CD4-positive, alpha-beta T cell (primary cell): ENCODE measurements at regions of chr7 and their contacts with region 1.

Region 1: DNA sequence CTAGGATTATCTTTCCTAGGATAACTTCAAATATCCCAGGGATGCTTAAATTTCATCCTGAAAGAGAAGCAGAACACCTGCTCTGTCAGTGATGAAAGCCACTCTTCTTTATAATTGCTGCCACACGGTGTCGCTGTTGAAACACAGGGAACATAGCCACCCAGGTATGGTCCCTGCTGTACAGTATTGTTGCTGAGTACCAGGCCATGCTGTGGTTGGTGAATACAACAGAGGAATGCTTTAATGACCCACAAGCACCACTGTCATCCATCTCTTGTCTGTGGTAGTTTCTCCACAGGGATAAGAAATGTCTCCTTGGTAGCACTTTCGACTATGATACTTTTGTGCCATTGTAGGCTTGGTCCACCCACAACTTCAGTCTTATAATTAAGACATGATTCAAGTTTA is 70.6 kb upstream of the STARD3NL start:
- DNase-seq: peak; percentile 34 to 80 (median 60)
- ATAC-seq: peak; percentile 81
- H3K4me3 ChIP-seq: no peak overlapping the region
- H3K4me3 Mint-ChIP-seq: no peak overlapping the region
- H3K27ac ChIP-seq: no peak overlapping the region
- H3K27ac Mint-ChIP-seq: no peak overlapping the region
- H3K4me1 ChIP-seq: no peaks in the 10 kb centered on the region
- H3K4me1 Mint-ChIP-seq: no peaks in the 10 kb centered on the region
- H3K27me3 ChIP-seq: peaks cover 0 to 5% of the 10 kb centered on the region in 2 experiments
- H3K27me3 Mint-ChIP-seq: peaks cover 12% of the 10 kb centered on the region
- CTCF ChIP-seq: peak; percentile 92

Region 2: DNA sequence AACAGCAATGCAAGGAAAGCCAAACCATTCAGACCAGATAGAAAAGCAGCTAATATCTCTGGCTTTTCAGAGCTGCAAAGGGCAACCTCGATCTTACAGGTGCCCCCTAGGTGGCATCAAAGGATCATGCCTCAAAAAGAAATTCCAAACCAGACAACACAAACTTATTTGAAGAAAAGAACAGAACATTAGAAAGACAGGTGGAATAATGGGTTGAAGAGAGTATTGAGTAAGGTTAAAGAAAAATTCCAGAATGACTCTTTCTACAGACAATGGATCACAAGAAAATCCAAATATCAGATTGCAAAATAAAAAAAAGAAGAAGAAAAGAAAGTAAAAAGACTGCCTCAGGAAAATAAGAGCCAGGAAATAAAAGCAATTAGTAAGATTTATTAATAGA is 872.6 kb before region 1 on chr7:
- CTCF ChIA-PET with region 1: no interaction called
- POLR2A ChIA-PET with region 1: no interaction called
- intact Hi-C with region 1: no loop called
- DNase-seq: peak in 6 of 14 experiments; percentile 5 to 61 (median 34)
- ATAC-seq: no peak
- H3K4me3 ChIP-seq: no peak overlapping the region
- H3K4me3 Mint-ChIP-seq: no peak overlapping the region
- H3K27ac ChIP-seq: no peak overlapping the region
- H3K27ac Mint-ChIP-seq: no peak overlapping the region
- H3K4me1 ChIP-seq: peaks cover 4% of the 10 kb centered on the region
- H3K4me1 Mint-ChIP-seq: peaks cover 33% of the 10 kb centered on the region
- H3K27me3 ChIP-seq: no peaks in the 10 kb centered on the region
- H3K27me3 Mint-ChIP-seq: no peaks in the 10 kb centered on the region
- CTCF ChIP-seq: peak; percentile 49

Region 3: GRCh38 chr7:37882086-37882485 is 225.4 kb before region 1 on chr7:
- CTCF ChIA-PET with region 1: no interaction called
- POLR2A ChIA-PET with region 1: no interaction called
- intact Hi-C with region 1: no loop called
- DNase-seq: peak in 1 of 14 experiments; percentile 0
- ATAC-seq: no peak
- H3K4me3 ChIP-seq: no peak overlapping the region
- H3K4me3 Mint-ChIP-seq: no peak overlapping the region
- H3K27ac ChIP-seq: no peak overlapping the region
- H3K27ac Mint-ChIP-seq: no peak overlapping the region
- H3K4me1 ChIP-seq: no peaks in the 10 kb centered on the region
- H3K4me1 Mint-ChIP-seq: no peaks in the 10 kb centered on the region
- H3K27me3 ChIP-seq: no peaks in the 10 kb centered on the region
- H3K27me3 Mint-ChIP-seq: peaks cover 22% of the 10 kb centered on the region
- CTCF ChIP-seq: no peak

Region 4: DNA sequence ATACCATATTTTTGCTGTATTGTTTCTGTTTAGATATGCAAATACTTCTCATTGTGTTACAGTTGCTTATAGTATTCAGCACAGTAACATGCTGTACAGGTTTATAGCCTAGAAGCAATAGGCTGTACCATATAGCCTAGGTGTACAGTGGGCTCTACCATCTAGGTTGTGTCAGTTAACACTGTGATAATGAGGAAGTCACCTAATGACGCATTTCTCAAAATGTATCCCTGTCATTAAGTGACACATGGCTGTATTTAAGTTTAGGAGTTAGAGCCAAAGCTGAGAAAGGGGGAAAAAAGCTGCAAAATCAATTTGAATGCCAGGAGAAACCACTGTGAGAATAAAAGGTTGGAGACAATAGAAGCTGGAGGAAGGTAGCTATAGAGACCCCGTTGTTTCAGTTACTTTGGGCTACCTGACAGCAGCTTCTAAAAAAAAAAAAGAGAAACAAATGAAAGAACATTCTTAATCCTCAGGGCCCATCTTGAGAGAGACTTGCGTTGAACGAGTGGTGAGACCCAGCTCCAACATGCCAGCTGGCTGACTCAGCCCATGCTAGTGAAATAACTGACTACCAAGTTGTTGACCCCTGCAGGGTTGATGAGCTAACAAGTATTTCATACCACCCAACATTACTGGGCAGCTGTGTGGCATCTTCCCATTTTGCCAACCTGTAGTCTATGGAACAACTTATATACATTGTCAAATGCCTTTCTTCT is 79.3 kb after region 1 on chr7:
- CTCF ChIA-PET with region 1: no interaction called
- POLR2A ChIA-PET with region 1: interaction called, 3 read pairs
- intact Hi-C with region 1: loop called in 1 of 2 experiments (anchors 10 kb)
- DNase-seq: no peak
- ATAC-seq: no peak
- H3K4me3 ChIP-seq: no peak overlapping the region
- H3K4me3 Mint-ChIP-seq: no peak overlapping the region
- H3K27ac ChIP-seq: no peak overlapping the region
- H3K27ac Mint-ChIP-seq: no peak overlapping the region
- H3K4me1 ChIP-seq: no peaks in the 10 kb centered on the region
- H3K4me1 Mint-ChIP-seq: peaks cover 22% of the 10 kb centered on the region
- H3K27me3 ChIP-seq: no peaks in the 10 kb centered on the region
- H3K27me3 Mint-ChIP-seq: no peaks in the 10 kb centered on the region
- CTCF ChIP-seq: no peak

Region 5: GRCh38 chr7:38222481-38223096 is 115.1 kb after region 1 on chr7:
- CTCF ChIA-PET with region 1: interaction called, 9 read pairs
- POLR2A ChIA-PET with region 1: interaction called, 3 read pairs
- intact Hi-C with region 1: loop called (anchors 1 kb)
- DNase-seq: peak in 5 of 14 experiments; percentile 7 to 82 (median 78)
- ATAC-seq: peak; percentile 92
- H3K4me3 ChIP-seq: no peak overlapping the region
- H3K4me3 Mint-ChIP-seq: no peak overlapping the region
- H3K27ac ChIP-seq: no peak overlapping the region
- H3K27ac Mint-ChIP-seq: peak overlapping the region; percentile 2
- H3K4me1 ChIP-seq: peaks cover 26% of the 10 kb centered on the region
- H3K4me1 Mint-ChIP-seq: peaks cover 11% of the 10 kb centered on the region
- H3K27me3 ChIP-seq: no peaks in the 10 kb centered on the region
- H3K27me3 Mint-ChIP-seq: no peaks in the 10 kb centered on the region
- CTCF ChIP-seq: peak; percentile 93

Region 6: GRCh38 chr7:38318803-38319416 is 211.4 kb after region 1 on chr7:
- CTCF ChIA-PET with region 1: no interaction called
- POLR2A ChIA-PET with region 1: no interaction called
- intact Hi-C with region 1: loop called in 1 of 2 experiments (anchors 5 kb)
- DNase-seq: peak in 4 of 14 experiments; percentile 36 to 59 (median 56)
- ATAC-seq: peak; percentile 56
- H3K4me3 ChIP-seq: peak overlapping the region; percentile 7
- H3K4me3 Mint-ChIP-seq: peak overlapping the region; percentile 62
- H3K27ac ChIP-seq: peak overlapping the region; percentile 15 to 21
- H3K27ac Mint-ChIP-seq: peak overlapping the region; percentile 72
- H3K4me1 ChIP-seq: peaks cover 19% of the 10 kb centered on the region
- H3K4me1 Mint-ChIP-seq: peaks cover 29% of the 10 kb centered on the region
- H3K27me3 ChIP-seq: no peaks in the 10 kb centered on the region
- H3K27me3 Mint-ChIP-seq: no peaks in the 10 kb centered on the region
- CTCF ChIP-seq: peak; percentile 43

Region 7: GRCh38 chr7:38369816-38370493 is 262.5 kb after region 1 on chr7:
- CTCF ChIA-PET with region 1: interaction called, 15 read pairs
- POLR2A ChIA-PET with region 1: interaction called, 5 read pairs
- intact Hi-C with region 1: loop called (anchors 1 to 2 kb)
- DNase-seq: peak; percentile 53 to 89 (median 76)
- ATAC-seq: peak; percentile 60
- H3K4me3 ChIP-seq: no peak overlapping the region
- H3K4me3 Mint-ChIP-seq: peak overlapping the region; percentile 59
- H3K27ac ChIP-seq: peak overlapping the region in 1 of 2 donors; percentile 52
- H3K27ac Mint-ChIP-seq: peak overlapping the region; percentile 85
- H3K4me1 ChIP-seq: peaks cover 41% of the 10 kb centered on the region
- H3K4me1 Mint-ChIP-seq: peaks cover 72% of the 10 kb centered on the region
- H3K27me3 ChIP-seq: no peaks in the 10 kb centered on the region
- H3K27me3 Mint-ChIP-seq: no peaks in the 10 kb centered on the region
- CTCF ChIP-seq: peak; percentile 85